ENCODE measurements at regions of chr17 and their contacts with region 1.

Region 1: DNA sequence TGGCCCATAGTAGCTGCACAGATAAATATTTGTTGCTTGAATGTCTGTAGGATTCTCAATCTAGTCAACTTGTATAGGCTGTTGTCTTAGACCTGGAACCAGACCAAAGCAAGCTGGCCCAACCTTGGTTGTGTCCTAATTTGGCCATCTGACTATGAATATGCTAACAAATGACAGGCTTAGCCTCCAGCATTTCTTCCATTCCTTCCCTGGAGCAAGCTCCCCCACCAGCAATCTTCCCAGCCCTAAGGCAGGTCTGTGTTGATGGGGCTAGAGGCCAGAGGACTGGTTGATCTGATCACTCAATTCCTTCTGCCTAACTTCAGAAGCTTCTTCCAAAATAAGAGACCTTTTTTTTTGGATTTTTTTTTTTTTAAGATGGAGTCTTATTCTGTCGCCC is 9.4 kb upstream of the PHOSPHO1 start:
- DNase-seq: no peak
- H3K4me3 ChIP-seq: no peak overlapping the region
- H3K4me1 ChIP-seq: no peaks in the 10 kb centered on the region
- H3K27me3 ChIP-seq: no peaks in the 10 kb centered on the region

Region 2: GRCh38 chr17:49285716-49286115 is 45.8 kb after region 1 on chr17:
- in situ Hi-C with region 1: loop called (anchors 5 kb)
- DNase-seq: no peak
- H3K4me3 ChIP-seq: no peak overlapping the region
- H3K4me1 ChIP-seq: no peaks in the 10 kb centered on the region
- H3K27me3 ChIP-seq: no peaks in the 10 kb centered on the region

Region 3: GRCh38 chr17:49508061-49508865 is 268.3 kb after region 1 on chr17:
- in situ Hi-C with region 1: no loop called
- DNase-seq: peak in 1 of 2 experiments; percentile 66
- H3K4me3 ChIP-seq: no peak overlapping the region
- H3K4me1 ChIP-seq: 0 out of 2 replicates have a peak, but pooled peaks cover 5% of the 10 kb centered on the region
- H3K27me3 ChIP-seq: no peaks in the 10 kb centered on the region

Measured in HAP-1 (cell line).